Panc1 (cell line): ENCODE measurements at regions of chr20 and their contacts with region 1.

Region 1: GRCh38 chr20:53352727-53353442 is 240.8 kb downstream of the ZNF217 start:
- DNase-seq: no peak
- ATAC-seq: no peak
- H3K4me3 ChIP-seq: no peak overlapping the region
- H3K27ac ChIP-seq: no peak overlapping the region
- H3K4me1 ChIP-seq: no peaks in the 10 kb centered on the region
- H3K27me3 ChIP-seq: no peaks in the 10 kb centered on the region
- CTCF ChIP-seq: no peak

Region 2: GRCh38 chr20:53381568-53382262 is 28.8 kb after region 1 on chr20:
- CTCF ChIA-PET with region 1: interaction called, 12 read pairs
- POLR2A ChIA-PET with region 1: no interaction called
- in situ Hi-C with region 1: no loop called
- intact Hi-C with region 1: no loop called
- DNase-seq: no peak
- ATAC-seq: no peak
- H3K4me3 ChIP-seq: no peak overlapping the region
- H3K27ac ChIP-seq: no peak overlapping the region
- H3K4me1 ChIP-seq: no peaks in the 10 kb centered on the region
- H3K27me3 ChIP-seq: no peaks in the 10 kb centered on the region; the same call in 1 of the 2 replicates
- CTCF ChIP-seq: peak; percentile 49